ENCODE measurements at regions of chr15 and their contacts with region 1.

Region 1: GRCh38 chr15:48285329-48286214 is 45.7 kb upstream of the DUT start:
- DNase-seq: peak; percentile 97
- H3K4me3 ChIP-seq: no peak overlapping the region
- CTCF ChIP-seq: peak; percentile 62

Region 2: DNA sequence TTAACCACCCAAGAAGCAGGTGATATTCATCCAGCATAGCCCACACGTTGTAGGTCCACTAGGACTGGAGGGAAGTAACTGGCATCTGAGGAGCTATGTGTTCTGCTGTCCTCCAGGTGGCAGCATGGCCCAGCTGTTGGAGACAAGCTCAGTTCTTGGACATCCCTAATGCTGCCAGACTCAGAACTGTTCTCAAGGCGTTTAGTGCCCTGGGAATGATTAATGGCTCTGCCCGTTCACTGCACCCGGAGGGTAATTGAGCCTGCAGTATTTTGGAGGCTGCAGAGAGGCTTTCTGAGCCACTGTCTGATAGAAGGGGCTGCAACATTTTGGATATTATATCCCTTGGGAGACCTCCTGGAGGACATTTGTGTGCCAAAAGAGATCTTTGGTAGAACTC is 1089.5 kb before region 1 on chr15:
- in situ Hi-C with region 1: loop called (anchors 25 kb)
- DNase-seq: peak; percentile 88
- H3K4me3 ChIP-seq: no peak overlapping the region
- CTCF ChIP-seq: peak; percentile 87

Region 3: DNA sequence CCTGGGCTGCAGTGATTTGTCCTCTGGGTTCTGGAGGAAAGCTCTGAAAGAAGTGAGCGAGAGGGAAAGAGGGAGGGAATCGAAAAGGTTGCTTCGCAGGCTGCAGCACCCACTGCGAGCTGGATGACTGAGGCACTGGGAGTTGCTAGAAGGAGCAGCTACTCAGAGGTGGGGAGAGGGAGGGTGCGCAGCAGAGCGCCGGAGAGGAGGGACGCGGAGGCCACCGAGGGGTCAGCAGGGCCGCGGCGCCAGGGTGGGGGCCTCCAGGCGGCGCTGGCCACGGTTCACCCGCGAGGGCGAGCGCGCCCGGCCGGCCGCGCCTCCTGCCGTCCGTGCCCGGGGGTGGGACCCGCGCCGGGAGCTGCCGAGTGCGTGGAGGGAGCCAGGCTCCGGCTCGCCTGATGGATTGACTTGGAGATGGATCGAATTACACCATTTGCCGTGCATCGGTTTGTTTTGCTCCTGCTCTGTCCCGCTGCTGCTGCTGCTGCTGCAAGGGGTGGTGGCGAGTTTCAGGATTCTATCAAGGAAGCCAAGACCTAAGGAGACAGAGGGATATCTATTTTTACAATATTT is 568.4 kb before region 1 on chr15 and contains the start of gene SEMA6D:
- in situ Hi-C with region 1: loop called (anchors 25 kb)
- DNase-seq: peak; percentile 55
- H3K4me3 ChIP-seq: peak within 1 kb of the TSS; percentile 60
- CTCF ChIP-seq: peak; percentile 22

Measured in astrocyte of the cerebellum (primary cell).